ENCODE measurements at regions of chr7 and their contacts with region 1.

Region 1: GRCh38 chr7:45927724-45928123 is 6.7 kb upstream of the IGFBP3 start:
- DNase-seq: no peak
- H3K4me3 ChIP-seq: no peak overlapping the region
- CTCF ChIP-seq: no peak

Region 2: DNA sequence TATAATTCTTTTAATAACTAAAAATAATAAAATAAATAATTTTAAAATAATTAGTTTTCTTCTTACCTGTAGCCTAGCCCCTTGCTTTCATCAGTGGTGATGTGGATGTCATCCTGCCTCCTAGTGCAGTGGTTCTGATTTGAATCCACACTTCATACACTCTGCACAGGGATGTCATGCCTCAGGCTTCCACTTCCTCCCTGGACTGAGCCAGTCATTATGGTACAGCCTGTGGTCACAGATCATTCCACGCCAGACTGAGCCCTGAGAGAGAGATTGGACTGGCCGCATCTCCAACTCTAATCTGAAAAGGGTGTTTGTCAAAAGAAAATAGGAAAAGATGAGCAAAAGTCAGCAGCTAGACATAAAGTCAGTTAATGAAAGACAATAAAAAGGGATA is 429.6 kb after region 1 on chr7:
- in situ Hi-C with region 1: loop called (anchors 5 kb)
- DNase-seq: no peak
- H3K4me3 ChIP-seq: no peak overlapping the region
- CTCF ChIP-seq: no peak